Activated T-helper 2 cell treated with anti-CD3 and anti-CD28 coated beads, Interferon-gamma antibody, Interleukin-2, Interleukin-4, amounts not matched to agents 10 μg/mL and 5 μg/mL and 100 μg/mL, durations not matched to agents 14 hours and 24 hours and 36 hours (primary cell): ENCODE measurements at regions of chr17 and their contacts with region 1.

Region 1: GRCh38 chr17:63842540-63843386 is at the start of gene SMARCD2:
- DNase-seq: peak; percentile 97
- H3K4me3 Mint-ChIP-seq: peak within 1 kb of the TSS; percentile 95
- H3K27ac Mint-ChIP-seq: peak within 1 kb of the TSS; percentile 92
- H3K4me1 Mint-ChIP-seq: peaks cover 24% of the 10 kb centered on the region
- H3K27me3 Mint-ChIP-seq: no peaks in the 10 kb centered on the region
- total RNA-seq, gene SMARCD2: 129 and 130 TPM in 2 replicates

Region 2: DNA sequence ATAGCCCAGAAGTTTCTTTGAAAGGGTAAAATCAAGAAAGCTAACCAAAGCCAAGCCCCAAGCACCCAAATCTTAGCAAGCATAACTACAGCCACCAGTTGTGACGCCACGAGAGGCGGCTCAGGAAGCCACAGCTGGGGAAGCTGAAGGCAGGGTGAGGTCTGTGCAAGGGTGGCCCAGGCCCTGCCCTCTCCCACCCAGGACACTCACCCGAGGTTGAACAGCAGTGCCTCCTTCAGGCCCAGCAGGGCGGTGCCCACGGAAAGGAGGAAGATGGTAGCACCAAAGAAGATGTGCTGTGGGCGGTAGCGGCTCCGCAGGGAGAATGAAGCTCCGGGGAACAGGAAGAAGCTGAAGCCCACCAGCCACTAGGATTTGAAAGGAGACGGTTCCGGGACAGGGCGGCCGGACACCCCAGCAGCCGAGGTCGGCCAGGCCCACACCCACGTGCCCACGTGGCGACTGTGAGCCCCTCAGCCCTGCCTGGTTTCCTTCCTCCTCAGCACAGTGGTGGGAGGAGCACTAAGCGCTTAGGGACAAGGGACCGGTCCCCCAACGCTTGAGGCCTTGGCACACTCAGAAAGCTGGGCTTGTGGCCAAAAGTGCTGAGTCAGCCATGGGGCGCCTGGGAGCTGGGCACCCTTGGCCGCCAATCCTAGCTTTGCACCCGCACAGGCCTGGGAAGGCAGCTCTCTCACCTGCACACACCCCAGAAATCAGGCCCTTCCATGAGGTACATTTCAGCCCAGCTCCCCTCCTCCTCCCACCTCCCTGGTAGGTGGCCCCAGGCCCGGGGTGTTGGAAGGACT is 407.7 kb before region 1 on chr17:
- intact Hi-C with region 1: no loop called
- DNase-seq: peak; percentile 36
- H3K4me3 Mint-ChIP-seq: no peak overlapping the region
- H3K27ac Mint-ChIP-seq: no peak overlapping the region
- H3K4me1 Mint-ChIP-seq: peaks cover 18% of the 10 kb centered on the region
- H3K27me3 Mint-ChIP-seq: peaks cover 2% of the 10 kb centered on the region

Region 3: DNA sequence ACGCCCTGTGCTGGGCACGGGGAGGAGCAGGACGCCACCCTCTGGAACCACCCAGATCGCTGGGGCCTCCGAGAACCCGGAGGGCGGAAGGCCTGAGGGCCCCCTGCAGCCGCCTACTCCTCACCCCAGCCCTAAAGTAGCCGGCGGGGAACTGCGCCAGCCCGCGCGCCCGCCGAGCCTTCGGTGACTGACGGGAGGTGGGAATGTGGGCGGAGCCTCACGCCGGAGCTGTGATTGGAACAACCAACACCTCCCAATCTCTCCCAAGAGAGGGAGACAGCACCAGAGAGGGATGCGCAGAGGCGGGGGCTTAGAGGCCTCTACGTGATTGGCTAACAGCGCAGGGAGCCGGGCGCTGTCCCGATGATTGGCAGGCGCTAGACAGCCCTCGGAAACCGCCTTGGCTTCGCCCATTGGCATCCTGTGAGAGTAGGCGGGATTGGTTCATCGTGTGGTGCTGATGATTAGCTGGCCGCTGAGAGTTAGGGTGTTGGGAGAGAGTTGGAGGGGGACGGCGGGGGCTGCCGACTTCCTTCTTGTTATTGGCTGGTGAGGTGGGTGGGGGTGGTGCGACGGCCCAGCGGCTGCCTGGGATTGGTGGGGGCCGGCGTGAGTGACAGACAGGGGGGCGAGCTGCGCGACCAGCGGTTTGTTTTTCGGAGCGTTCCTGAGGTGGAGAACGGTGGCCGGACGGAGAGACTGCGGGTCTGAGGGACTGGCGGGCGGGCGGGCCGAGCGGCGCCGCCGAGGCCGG is 220.8 kb before region 1 on chr17 and contains the start of gene MAP3K3:
- intact Hi-C with region 1: loop called (anchors 5 kb)
- DNase-seq: peak; percentile 98
- H3K4me3 Mint-ChIP-seq: peak within 1 kb of the TSS; percentile 99
- H3K27ac Mint-ChIP-seq: peak within 1 kb of the TSS; percentile 92
- H3K4me1 Mint-ChIP-seq: peaks cover 31% of the 10 kb centered on the region
- H3K27me3 Mint-ChIP-seq: peaks cover 13% of the 10 kb centered on the region
- total RNA-seq, gene MAP3K3: 27.9 and 28.7 TPM in 2 replicates

Region 4: GRCh38 chr17:63741221-63742049 is 101.3 kb before region 1 on chr17 and contains the start of gene STRADA:
- intact Hi-C with region 1: loop called (anchors 5 kb)
- DNase-seq: peak; percentile 99
- H3K4me3 Mint-ChIP-seq: peak within 1 kb of the TSS; percentile 98
- H3K27ac Mint-ChIP-seq: peak within 1 kb of the TSS; percentile 96
- H3K4me1 Mint-ChIP-seq: peaks cover 20% of the 10 kb centered on the region
- H3K27me3 Mint-ChIP-seq: no peaks in the 10 kb centered on the region
- total RNA-seq, gene STRADA: 54.0 and 57.4 TPM in 2 replicates

Region 5: DNA sequence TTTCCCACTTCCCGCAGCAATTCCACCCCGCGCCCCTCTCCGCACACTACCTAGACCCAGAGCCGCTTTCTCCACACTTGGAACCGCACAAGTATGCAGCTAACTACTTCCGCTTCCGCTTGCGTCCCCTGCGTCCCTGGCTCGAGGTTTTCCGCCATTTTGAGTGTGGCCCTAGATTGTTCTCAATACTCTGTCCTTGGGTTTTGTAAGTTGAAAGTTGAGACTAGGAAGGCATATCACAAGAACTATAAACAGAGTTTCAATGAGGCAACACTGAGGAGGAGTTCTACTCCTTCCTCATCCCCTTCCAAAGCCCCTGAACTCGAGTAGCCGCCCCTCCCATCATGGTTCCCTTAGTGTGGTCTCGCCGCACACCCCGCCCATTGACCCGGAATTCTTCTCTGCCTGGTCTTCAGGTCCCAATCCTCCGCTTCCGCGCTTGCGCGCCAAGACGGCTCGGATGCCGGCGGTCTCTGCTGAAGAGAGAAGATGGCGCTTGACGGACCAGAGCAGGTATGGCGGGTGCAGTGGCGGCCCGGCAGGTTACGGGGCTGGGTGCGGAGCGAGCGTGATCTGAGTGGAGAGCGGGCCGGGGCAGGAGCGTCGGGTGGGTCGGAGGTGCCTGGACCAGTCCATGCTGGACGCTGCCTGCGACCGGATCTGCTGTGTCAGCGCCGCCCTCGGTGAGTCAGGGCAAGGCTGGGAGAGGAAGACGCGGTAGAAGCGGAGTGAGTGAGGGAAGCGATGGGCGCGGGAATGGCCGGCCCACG is 15.6 kb before region 1 on chr17 and contains the starts of genes FTSJ3 and PSMC5:
- intact Hi-C with region 1: loop called (anchors 1 kb)
- DNase-seq: peak; percentile 94
- H3K4me3 Mint-ChIP-seq: peak within 1 kb of the TSS; percentile 94
- H3K27ac Mint-ChIP-seq: peak within 1 kb of the TSS; percentile 99
- H3K4me1 Mint-ChIP-seq: peaks cover 56% of the 10 kb centered on the region
- H3K27me3 Mint-ChIP-seq: no peaks in the 10 kb centered on the region
- total RNA-seq, gene FTSJ3: 75.0 and 80.7 TPM in 2 replicates
- total RNA-seq, gene PSMC5: 185 and 204 TPM in 2 replicates

Region 6: GRCh38 chr17:63919311-63919723 is 76.6 kb after region 1 on chr17:
- intact Hi-C with region 1: no loop called
- DNase-seq: peak; percentile 64
- H3K4me3 Mint-ChIP-seq: no peak overlapping the region
- H3K27ac Mint-ChIP-seq: no peak overlapping the region
- H3K4me1 Mint-ChIP-seq: peaks cover 8% of the 10 kb centered on the region
- H3K27me3 Mint-ChIP-seq: peaks cover 8% of the 10 kb centered on the region

Region 7: GRCh38 chr17:64145757-64146417 is 303.1 kb after region 1 on chr17:
- intact Hi-C with region 1: loop called (anchors 10 kb)
- DNase-seq: peak; percentile 94
- H3K4me3 Mint-ChIP-seq: no peak overlapping the region
- H3K27ac Mint-ChIP-seq: no peak overlapping the region
- H3K4me1 Mint-ChIP-seq: peaks cover 21% of the 10 kb centered on the region
- H3K27me3 Mint-ChIP-seq: no peaks in the 10 kb centered on the region